IMR-90 (cell line): ENCODE measurements at regions of chr9 and their contacts with region 1.

Region 1: GRCh38 chr9:110152704-110153374 is 55.1 kb downstream of the C9orf152 start:
- DNase-seq: peak; percentile 72
- ATAC-seq: peak; percentile 48
- H3K4me3 ChIP-seq: no peak overlapping the region
- H3K27ac ChIP-seq: peak overlapping the region; percentile 24; the same call in 1 of the 2 replicates
- H3K4me1 ChIP-seq: peaks cover 28% of the 10 kb centered on the region
- H3K27me3 ChIP-seq: no peaks in the 10 kb centered on the region
- CTCF ChIP-seq: peak; percentile 76
- POLR2A ChIP-seq: no peak
- RAD21 ChIP-seq: peak; percentile 84

Region 2: GRCh38 chr9:109590945-109591344 is 561.9 kb before region 1 on chr9:
- CTCF ChIA-PET with region 1: no interaction called
- POLR2A ChIA-PET with region 1: no interaction called
- dilution Hi-C with region 1: no loop called
- in situ Hi-C with region 1: loop called (anchors 25 kb)
- intact Hi-C with region 1: no loop called
- DNase-seq: no peak
- ATAC-seq: no peak
- H3K4me3 ChIP-seq: no peak overlapping the region
- H3K27ac ChIP-seq: no peak overlapping the region
- H3K4me1 ChIP-seq: no peaks in the 10 kb centered on the region
- H3K27me3 ChIP-seq: peaks cover 40% of the 10 kb centered on the region
- CTCF ChIP-seq: no peak
- POLR2A ChIP-seq: no peak
- RAD21 ChIP-seq: no peak

Region 3: GRCh38 chr9:109903515-109904138 is 249.2 kb before region 1 on chr9:
- CTCF ChIA-PET with region 1: interaction called, 7 read pairs
- POLR2A ChIA-PET with region 1: no interaction called
- dilution Hi-C with region 1: no loop called
- in situ Hi-C with region 1: loop called (anchors 5 kb)
- intact Hi-C with region 1: loop called (anchors 1 kb)
- DNase-seq: peak; percentile 83
- ATAC-seq: peak; percentile 59
- H3K4me3 ChIP-seq: no peak overlapping the region
- H3K27ac ChIP-seq: no peak overlapping the region
- H3K4me1 ChIP-seq: peaks cover 20% of the 10 kb centered on the region
- H3K27me3 ChIP-seq: no peaks in the 10 kb centered on the region
- CTCF ChIP-seq: peak; percentile 93
- POLR2A ChIP-seq: no peak
- RAD21 ChIP-seq: peak; percentile 97

Region 4: DNA sequence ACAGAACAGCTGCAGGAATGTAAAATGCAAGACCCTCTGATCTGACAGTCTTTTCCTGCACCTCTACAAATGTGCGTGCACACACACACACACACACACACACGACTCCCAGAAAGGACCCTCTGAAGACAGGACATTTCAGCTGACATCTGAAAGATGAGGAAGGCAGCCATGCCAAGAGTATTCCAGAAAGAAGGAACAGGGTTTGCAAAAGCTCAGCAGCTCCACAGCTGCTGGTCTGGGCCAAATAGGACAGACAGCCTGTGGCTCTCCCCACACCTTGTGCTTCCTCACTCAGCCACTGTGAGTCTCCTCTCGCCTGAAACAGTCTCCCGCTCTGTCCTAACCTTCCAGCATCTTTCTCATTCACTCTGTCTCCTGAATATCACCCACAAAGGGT is 183.8 kb before region 1 on chr9:
- CTCF ChIA-PET with region 1: no interaction called
- POLR2A ChIA-PET with region 1: no interaction called
- dilution Hi-C with region 1: no loop called
- in situ Hi-C with region 1: no loop called
- intact Hi-C with region 1: loop called (anchors 5 kb)
- DNase-seq: peak; percentile 54
- ATAC-seq: peak; percentile 79
- H3K4me3 ChIP-seq: no peak overlapping the region
- H3K27ac ChIP-seq: no peak overlapping the region; the same call in 1 of the 2 replicates
- H3K4me1 ChIP-seq: peaks cover 23% of the 10 kb centered on the region
- H3K27me3 ChIP-seq: no peaks in the 10 kb centered on the region
- CTCF ChIP-seq: peak; percentile 34; the same call in 1 of the 2 replicates
- POLR2A ChIP-seq: no peak
- RAD21 ChIP-seq: peak; percentile 45

Region 5: GRCh38 chr9:110058304-110058953 is 94.4 kb before region 1 on chr9:
- CTCF ChIA-PET with region 1: no interaction called
- POLR2A ChIA-PET with region 1: no interaction called
- dilution Hi-C with region 1: loop called (anchors 25 kb)
- in situ Hi-C with region 1: loop called (anchors 5 kb)
- intact Hi-C with region 1: no loop called
- DNase-seq: peak; percentile 52
- ATAC-seq: peak; percentile 16
- H3K4me3 ChIP-seq: no peak overlapping the region
- H3K27ac ChIP-seq: no peak overlapping the region; the same call in 1 of the 2 replicates
- H3K4me1 ChIP-seq: peaks cover 8% of the 10 kb centered on the region
- H3K27me3 ChIP-seq: no peaks in the 10 kb centered on the region
- CTCF ChIP-seq: peak; percentile 47
- POLR2A ChIP-seq: no peak
- RAD21 ChIP-seq: peak; percentile 68